Activated CD4-positive, alpha-beta T cell treated with anti-CD3 and anti-CD28 coated beads for 36 hours (primary cell): ENCODE measurements at regions of chr3 and their contacts with region 1.

Region 1: GRCh38 chr3:44685128-44685800 is 27.2 kb upstream of the ZNF502 start:
- DNase-seq: peak; percentile 77
- ATAC-seq: peak; percentile 92
- H3K4me3 Mint-ChIP-seq: peak overlapping the region; percentile 73
- H3K27ac Mint-ChIP-seq: peak overlapping the region; percentile 29
- H3K4me1 Mint-ChIP-seq: peaks cover 11% of the 10 kb centered on the region
- H3K27me3 Mint-ChIP-seq: peaks cover 23% of the 10 kb centered on the region

Region 2: GRCh38 chr3:44439499-44440295 is 245.6 kb before region 1 on chr3:
- CTCF ChIA-PET with region 1: no interaction called
- POLR2A ChIA-PET with region 1: no interaction called
- intact Hi-C with region 1: no loop called
- DNase-seq: peak; percentile 86
- ATAC-seq: peak; percentile 88
- H3K4me3 Mint-ChIP-seq: peak overlapping the region; percentile 58
- H3K27ac Mint-ChIP-seq: peak overlapping the region; percentile 97
- H3K4me1 Mint-ChIP-seq: peaks cover 43% of the 10 kb centered on the region
- H3K27me3 Mint-ChIP-seq: no peaks in the 10 kb centered on the region

Region 3: GRCh38 chr3:44648564-44649229 is 36.6 kb before region 1 on chr3 and contains the start of gene ZNF35:
- CTCF ChIA-PET with region 1: interaction called, 3 read pairs
- POLR2A ChIA-PET with region 1: no interaction called
- intact Hi-C with region 1: loop called in 1 of 2 experiments (anchors 5 kb)
- DNase-seq: peak; percentile 67
- ATAC-seq: peak; percentile 85
- H3K4me3 Mint-ChIP-seq: peak within 1 kb of the TSS; percentile 76
- H3K27ac Mint-ChIP-seq: no peak within 1 kb of the TSS
- H3K4me1 Mint-ChIP-seq: peaks cover 8% of the 10 kb centered on the region
- H3K27me3 Mint-ChIP-seq: no peaks in the 10 kb centered on the region
- total RNA-seq, gene ZNF35: 2.0 to 2.7 TPM

Region 4: GRCh38 chr3:44712455-44713075 is 27.3 kb after region 1 on chr3 and contains the start of gene ZNF502:
- CTCF ChIA-PET with region 1: no interaction called
- POLR2A ChIA-PET with region 1: no interaction called
- intact Hi-C with region 1: loop called in 1 of 2 experiments (anchors 1 kb)
- DNase-seq: peak; percentile 80
- ATAC-seq: peak; percentile 92
- H3K4me3 Mint-ChIP-seq: peak within 1 kb of the TSS; percentile 84
- H3K27ac Mint-ChIP-seq: peak within 1 kb of the TSS; percentile 77
- H3K4me1 Mint-ChIP-seq: peaks cover 17% of the 10 kb centered on the region
- H3K27me3 Mint-ChIP-seq: peaks cover 19% of the 10 kb centered on the region
- total RNA-seq, gene ZNF502: 1.8 to 2.4 TPM

Region 5: GRCh38 chr3:44729384-44729910 is 44.2 kb after region 1 on chr3 and contains the start of gene ZNF501:
- CTCF ChIA-PET with region 1: no interaction called
- POLR2A ChIA-PET with region 1: no interaction called
- intact Hi-C with region 1: loop called in 1 of 2 experiments (anchors 1 kb)
- DNase-seq: peak; percentile 92
- ATAC-seq: peak; percentile 98
- H3K4me3 Mint-ChIP-seq: peak within 1 kb of the TSS; percentile 83
- H3K27ac Mint-ChIP-seq: peak within 1 kb of the TSS; percentile 80
- H3K4me1 Mint-ChIP-seq: peaks cover 13% of the 10 kb centered on the region
- H3K27me3 Mint-ChIP-seq: no peaks in the 10 kb centered on the region
- total RNA-seq, gene ZNF501: 1.7 to 2.0 TPM